ENCODE measurements at regions of chr2 and their contacts with region 1.

Region 1: GRCh38 chr2:172449911-172450550 is 22.6 kb downstream of the ITGA6 start:
- DNase-seq: no peak
- ATAC-seq: no peak
- H3K4me3 ChIP-seq: no peak overlapping the region
- H3K27ac ChIP-seq: no peak overlapping the region
- H3K4me1 ChIP-seq: peaks cover 53% of the 10 kb centered on the region
- H3K27me3 ChIP-seq: no peaks in the 10 kb centered on the region
- CTCF ChIP-seq: no peak
- POLR2A ChIP-seq: no peak

Region 2: GRCh38 chr2:172181840-172182239 is 268.2 kb before region 1 on chr2:
- intact Hi-C with region 1: loop called (anchors 5 kb)
- DNase-seq: no peak
- ATAC-seq: no peak
- H3K4me3 ChIP-seq: no peak overlapping the region
- H3K27ac ChIP-seq: no peak overlapping the region
- H3K4me1 ChIP-seq: no peaks in the 10 kb centered on the region
- H3K27me3 ChIP-seq: no peaks in the 10 kb centered on the region
- CTCF ChIP-seq: no peak
- POLR2A ChIP-seq: no peak